Posterior cingulate gyrus (tissue), 11 donors: ENCODE measurements at regions of chr4 and their contacts with region 1.

Region 1: DNA sequence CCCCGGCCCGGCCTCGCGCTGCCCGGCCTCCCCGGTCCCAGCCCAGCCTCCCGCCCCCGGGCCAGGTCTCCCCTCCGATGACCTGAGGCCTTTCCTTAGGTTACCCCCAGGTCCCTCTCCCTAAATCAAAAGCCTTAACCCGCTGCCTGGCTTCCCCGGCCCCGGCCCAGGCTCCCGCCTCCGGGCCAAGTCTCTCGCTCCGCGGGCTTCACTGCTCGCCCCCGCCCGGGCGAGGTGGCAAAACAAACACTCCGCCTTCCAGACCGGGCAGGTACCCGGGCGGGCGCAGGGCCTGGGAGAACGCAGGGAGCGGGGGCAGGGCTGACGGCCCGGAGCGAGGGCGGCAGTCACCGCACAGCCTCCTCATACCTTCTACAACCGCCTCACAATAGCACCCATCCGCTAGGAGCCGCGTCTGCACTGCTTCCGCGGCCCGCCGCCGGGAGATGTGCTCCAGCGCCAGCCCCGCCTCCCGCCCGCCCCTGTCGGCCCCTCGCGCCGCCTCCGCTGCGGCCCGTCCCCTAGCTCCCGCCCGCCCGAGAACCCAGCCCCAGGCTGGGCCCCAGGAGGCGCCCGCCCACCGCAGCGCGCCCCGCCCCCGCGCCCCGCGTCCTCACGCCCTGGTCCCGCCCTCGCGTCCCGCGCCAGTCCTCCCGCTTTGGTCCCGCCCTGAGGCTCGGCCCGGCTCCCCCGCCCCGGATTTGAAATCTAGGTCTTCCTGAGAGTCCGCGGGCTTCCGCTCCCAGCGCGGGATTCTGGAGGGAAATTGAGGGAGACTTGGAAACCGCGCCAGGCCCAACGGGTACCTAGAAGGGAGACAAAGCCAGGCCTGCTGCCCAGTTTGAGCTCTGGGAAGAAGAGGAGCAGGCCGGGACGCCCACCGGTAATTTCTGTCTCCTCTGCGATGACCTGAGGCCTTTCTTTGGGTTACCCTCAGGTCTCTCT is at the starts of genes CASP3 and PRIMPOL:
- DNase-seq: peak; percentile 94 to 99 (median 96)

Region 2: DNA sequence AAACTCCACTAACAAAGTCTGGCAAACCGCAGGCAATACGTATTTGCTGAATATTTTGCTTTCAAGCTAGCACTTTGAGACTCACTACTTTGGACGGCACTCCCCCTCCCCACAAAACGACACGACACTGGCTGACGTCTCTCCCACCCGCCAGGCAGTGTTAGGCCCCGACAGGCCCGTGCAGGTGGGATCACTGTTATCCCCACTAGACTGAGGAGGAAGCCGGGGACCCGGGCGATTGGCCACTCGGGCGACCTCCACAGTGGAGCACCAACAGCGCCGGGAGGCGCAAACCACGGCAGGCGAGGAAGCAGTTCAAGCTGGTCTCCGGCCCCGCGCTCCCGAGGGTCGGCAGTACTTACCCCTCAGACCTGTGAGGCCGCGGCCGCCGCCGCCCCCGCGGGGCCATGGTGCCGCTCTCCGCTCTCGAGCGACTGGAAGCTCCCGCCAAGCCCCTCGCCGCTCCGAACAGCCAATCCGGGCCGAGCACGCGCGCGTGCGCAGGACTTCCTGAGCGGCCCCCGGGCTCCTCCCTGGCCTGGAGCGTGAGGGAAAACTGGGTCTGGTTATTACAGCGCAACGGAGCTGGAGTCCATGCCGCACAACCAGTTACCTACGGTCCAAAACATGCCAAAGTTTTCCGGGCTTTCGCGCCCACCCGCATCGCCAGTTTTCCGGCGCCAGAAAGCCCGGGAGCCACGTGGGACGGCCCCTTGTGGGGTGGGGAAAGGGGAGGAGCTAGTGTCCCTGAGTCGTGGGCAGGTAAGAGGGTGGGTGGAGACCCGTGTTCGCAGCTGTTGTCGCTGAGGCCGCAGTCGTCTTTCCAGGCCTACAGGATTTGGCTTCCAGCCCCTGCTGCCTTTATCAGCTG is 84.6 kb after region 1 on chr4 and contains the start of gene CENPU:
- intact Hi-C with region 1: loop called (anchors 2 kb)
- DNase-seq: peak; percentile 91 to 99 (median 96)

Region 3: DNA sequence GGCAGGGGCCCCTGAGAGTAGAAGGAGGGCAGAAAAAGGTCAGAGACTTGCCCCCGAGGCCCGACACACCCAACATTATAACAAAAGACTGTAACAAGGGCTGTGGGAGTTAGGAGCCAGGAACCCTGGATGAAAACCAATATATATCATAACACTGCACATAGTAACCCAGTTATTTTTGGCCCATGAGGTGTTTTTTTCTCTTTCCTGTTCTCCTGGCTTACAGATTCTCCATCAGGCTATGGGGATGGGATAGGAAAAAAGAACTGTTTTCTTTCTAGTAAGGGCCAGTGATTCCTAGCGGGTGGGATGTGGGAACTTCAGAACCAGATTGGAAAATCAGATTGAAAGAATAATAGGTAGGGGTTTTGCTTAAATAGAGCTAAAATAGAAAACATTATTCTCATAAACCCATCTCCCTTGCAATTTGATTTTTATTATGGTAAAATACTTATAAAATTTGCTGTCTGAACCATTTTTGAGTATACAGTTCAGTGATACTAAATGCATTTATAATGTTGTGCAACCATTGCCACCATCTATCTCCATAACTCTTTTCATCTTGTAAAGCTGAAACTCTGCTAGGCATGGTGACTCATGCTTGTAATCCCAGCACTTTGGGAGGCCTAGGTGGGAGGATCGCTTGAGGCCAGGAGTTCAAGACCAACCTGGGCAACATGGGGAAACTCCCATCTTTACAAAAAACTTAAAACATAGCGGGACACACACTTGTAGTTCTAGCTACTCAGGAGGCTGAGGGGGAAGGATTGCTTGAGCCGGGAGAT is 593.6 kb after region 1 on chr4:
- intact Hi-C with region 1: no loop called
- DNase-seq: no peak

Region 4: GRCh38 chr4:185700048-185700447 is 1050.8 kb after region 1 on chr4:
- intact Hi-C with region 1: no loop called
- DNase-seq: no peak